ENCODE measurements at regions of chr1 and their contacts with region 1.

Region 1: GRCh38 chr1:8097077-8097799 is 71.1 kb upstream of the ERRFI1 start:
- DNase-seq: peak; percentile 94
- H3K4me3 ChIP-seq: peak overlapping the region in 1 of 3 experiments; percentile 20
- H3K27ac ChIP-seq: peak overlapping the region; percentile 98
- H3K4me1 ChIP-seq: peaks cover 49% of the 10 kb centered on the region
- H3K27me3 ChIP-seq: no peaks in the 10 kb centered on the region
- CTCF ChIP-seq: no peak
- POLR2A ChIP-seq: no peak

Region 2: DNA sequence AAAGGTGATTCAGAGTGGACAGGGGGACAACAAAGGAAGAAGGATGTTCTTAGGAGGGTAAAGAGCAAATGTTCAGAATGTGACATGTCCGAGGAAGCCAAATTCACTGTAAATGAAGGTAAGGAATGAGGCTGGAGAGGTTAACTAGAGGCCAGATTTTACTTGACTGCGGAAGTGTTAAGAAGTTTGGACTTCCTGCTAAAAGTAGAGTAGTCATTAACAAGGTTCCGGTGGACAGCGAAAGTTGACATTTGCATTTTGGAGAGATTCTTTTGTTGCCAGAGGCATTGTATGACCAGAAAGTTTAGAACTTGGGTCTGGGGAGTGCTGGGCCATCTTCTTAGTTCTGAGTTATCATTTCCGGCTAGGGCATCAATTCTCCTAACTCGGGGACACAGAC is 63.9 kb before region 1 on chr1:
- CTCF ChIA-PET with region 1: interaction called, 9 read pairs
- POLR2A ChIA-PET with region 1: no interaction called
- dilution Hi-C with region 1: no loop called
- intact Hi-C with region 1: loop called (anchors 1 kb)
- DNase-seq: no peak
- H3K4me3 ChIP-seq: no peak overlapping the region
- H3K27ac ChIP-seq: no peak overlapping the region
- H3K4me1 ChIP-seq: peaks cover 12% of the 10 kb centered on the region
- H3K27me3 ChIP-seq: no peaks in the 10 kb centered on the region
- CTCF ChIP-seq: no peak
- POLR2A ChIP-seq: no peak

Region 3: DNA sequence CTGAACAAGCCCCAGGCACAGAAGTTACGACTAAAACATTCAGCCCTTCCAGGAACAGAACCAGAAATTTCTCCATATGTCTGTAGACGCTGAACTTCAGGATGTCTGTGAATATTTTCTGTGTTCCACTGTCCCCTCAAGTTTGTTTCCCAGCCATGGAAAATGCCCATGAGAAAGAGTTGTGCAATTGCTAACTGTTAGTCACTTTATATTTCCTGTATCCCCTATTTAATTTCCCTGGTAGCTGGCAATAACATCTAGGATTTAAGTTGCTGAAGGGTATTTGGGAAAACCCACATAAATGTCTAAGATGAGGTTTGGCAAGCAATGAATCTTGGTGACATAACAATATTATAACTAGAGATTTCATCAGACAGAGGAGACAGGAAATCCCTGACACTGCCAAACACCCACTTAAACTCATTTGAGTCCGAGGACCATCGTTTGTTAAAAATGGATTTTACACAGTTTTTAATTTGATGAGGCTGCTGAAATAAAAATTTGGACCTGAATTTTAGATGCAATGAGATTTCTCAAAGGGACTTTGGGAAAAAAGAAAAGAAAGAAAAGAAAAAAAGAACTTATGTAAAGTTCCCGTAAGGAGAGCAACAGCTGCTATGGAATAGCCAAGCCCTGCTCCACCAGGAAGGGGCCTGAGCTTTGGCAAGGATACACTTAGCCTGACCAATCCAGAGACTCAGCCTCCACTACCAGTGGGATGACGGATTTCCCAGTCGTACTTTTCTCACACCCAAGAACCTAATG is 49.4 kb before region 1 on chr1:
- CTCF ChIA-PET with region 1: no interaction called
- POLR2A ChIA-PET with region 1: no interaction called
- dilution Hi-C with region 1: loop called (anchors 10 kb)
- intact Hi-C with region 1: loop called (anchors 1 kb)
- DNase-seq: peak; percentile 90
- H3K4me3 ChIP-seq: no peak overlapping the region
- H3K27ac ChIP-seq: peak overlapping the region; percentile 81
- H3K4me1 ChIP-seq: peaks cover 29% of the 10 kb centered on the region
- H3K27me3 ChIP-seq: no peaks in the 10 kb centered on the region
- CTCF ChIP-seq: no peak
- POLR2A ChIP-seq: no peak

Region 4: DNA sequence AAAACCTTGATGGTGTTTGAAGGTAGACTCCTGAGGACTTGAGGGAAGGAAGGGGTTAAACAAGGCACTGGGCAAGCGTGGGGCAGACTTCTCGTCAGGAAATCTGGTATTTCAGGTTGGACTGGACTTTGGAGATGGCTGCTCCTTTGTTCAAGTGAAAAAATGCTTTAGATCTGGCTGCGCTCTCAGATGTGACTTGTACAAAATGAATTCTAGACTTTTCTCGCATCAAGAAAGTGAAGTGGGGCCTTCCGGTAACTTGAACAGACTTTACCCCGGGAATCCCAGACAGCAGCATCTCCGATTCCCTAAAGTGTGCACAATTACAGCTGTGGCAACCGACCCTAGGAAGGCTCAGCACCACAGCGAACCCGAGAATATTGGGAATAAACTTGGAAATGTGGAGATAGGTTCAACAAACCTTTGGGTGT is 26.8 kb before region 1 on chr1:
- CTCF ChIA-PET with region 1: no interaction called
- POLR2A ChIA-PET with region 1: no interaction called
- dilution Hi-C with region 1: no loop called
- intact Hi-C with region 1: no loop called
- DNase-seq: no peak
- H3K4me3 ChIP-seq: no peak overlapping the region
- H3K27ac ChIP-seq: no peak overlapping the region
- H3K4me1 ChIP-seq: peaks cover 2% of the 10 kb centered on the region
- H3K27me3 ChIP-seq: no peaks in the 10 kb centered on the region
- CTCF ChIP-seq: no peak
- POLR2A ChIP-seq: no peak

Region 5: DNA sequence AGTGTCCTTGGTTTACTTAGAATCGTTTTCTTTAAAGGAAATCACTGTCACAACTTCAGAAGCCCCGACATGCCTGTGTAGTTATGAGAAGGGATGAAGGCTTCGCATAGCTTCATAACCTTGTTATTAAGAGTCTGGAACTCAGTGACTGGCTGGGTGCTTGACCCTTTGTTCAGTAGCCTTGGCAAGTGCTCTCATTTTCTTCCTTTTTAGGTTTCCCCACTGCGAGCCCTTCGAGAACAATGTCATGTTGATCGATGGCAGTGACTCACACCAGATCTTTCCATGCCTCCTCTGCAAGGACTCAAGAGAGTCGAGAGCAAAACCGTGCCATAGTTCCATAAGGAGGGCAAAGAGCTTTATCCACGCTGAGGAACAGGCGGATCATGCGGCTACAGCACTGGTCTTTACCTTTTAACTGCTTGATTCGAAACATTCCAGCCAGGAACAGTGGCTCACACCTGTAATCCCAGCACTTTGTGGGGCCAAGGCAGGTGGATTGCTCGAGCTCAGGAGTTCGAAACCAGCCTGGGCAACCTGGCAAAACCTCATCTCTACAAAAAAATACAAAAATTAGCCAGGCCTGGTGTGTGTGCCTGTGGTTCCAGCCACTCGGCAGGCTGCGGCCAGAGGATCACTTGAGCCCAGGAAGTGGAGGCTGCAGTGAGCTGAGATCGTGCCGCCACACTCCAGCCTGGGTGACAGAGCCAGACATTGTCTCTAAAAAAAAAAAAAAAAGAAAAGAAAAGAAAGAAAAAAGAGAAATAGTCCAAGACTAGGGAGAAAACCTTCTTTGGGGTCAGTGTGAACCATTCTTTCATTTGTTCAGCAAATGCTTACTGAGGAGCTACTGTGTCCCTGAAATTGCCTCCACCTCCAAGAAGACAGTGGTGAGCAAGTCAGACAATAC is 24.3 kb after region 1 on chr1:
- CTCF ChIA-PET with region 1: interaction called, 10 read pairs
- POLR2A ChIA-PET with region 1: interaction called, 19 read pairs
- dilution Hi-C with region 1: no loop called
- intact Hi-C with region 1: loop called (anchors 1 kb)
- DNase-seq: peak; percentile 99
- H3K4me3 ChIP-seq: peak overlapping the region in 1 of 3 experiments; percentile 6
- H3K27ac ChIP-seq: peak overlapping the region; percentile 96
- H3K4me1 ChIP-seq: peaks cover 50% of the 10 kb centered on the region
- H3K27me3 ChIP-seq: no peaks in the 10 kb centered on the region
- CTCF ChIP-seq: no peak
- POLR2A ChIP-seq: peak; percentile 44

Region 6: GRCh38 chr1:8238851-8239305 is 141.6 kb after region 1 on chr1:
- CTCF ChIA-PET with region 1: no interaction called
- POLR2A ChIA-PET with region 1: no interaction called
- dilution Hi-C with region 1: no loop called
- intact Hi-C with region 1: loop called (anchors 2 kb)
- DNase-seq: peak; percentile 33
- H3K4me3 ChIP-seq: no peak overlapping the region
- H3K27ac ChIP-seq: peak overlapping the region; percentile 36
- H3K4me1 ChIP-seq: peaks cover 25% of the 10 kb centered on the region
- H3K27me3 ChIP-seq: no peaks in the 10 kb centered on the region
- CTCF ChIP-seq: peak; percentile 6 to 21
- POLR2A ChIP-seq: no peak

Region 7: DNA sequence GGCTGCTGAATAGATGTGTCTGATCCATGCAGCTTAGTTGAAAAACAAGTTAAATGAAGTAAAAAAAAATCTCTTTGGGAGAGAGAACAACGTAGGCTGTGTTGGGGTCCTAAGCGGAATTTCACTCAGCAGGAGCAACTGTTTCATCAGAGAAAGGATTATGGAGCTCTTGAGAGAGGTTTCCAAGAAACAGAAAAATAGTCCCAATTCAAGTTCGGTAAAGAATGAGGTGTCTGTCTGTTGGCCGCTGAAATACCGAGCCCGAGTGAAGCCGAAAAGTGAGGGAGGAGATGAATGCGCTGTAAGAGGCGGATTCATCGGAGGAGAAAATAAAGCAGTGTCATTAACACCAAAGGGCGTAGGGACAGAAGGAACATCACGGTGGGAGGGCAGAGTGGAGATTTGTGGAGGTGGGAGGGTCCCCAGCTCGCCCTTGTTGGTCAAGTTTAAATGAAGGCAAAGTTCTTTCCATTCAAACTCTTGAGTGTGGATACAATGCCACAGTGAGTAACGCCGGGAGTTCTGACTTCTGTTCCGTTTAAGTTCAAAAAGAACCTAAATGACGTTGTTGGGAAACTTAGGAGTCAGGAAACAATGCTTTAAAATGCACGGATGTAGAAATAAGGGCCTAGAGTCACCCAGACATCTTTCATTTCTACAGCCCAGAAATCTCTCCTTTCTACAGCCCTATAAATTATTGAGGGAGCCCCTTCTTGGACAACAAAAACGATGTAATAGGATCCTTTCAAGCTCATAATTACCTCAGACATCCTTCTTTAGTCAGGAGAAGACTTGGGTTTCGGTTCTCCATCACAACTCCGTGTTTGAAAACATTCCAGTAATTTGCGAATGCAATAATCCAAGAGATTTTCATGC is 205.1 kb after region 1 on chr1:
- CTCF ChIA-PET with region 1: no interaction called
- POLR2A ChIA-PET with region 1: no interaction called
- dilution Hi-C with region 1: no loop called
- intact Hi-C with region 1: no loop called
- DNase-seq: no peak
- H3K4me3 ChIP-seq: no peak overlapping the region
- H3K27ac ChIP-seq: no peak overlapping the region
- H3K4me1 ChIP-seq: no peaks in the 10 kb centered on the region
- H3K27me3 ChIP-seq: peaks cover 0 to 2% of the 10 kb centered on the region in 2 experiments
- CTCF ChIP-seq: no peak
- POLR2A ChIP-seq: no peak

Measured in endothelial cell of umbilical vein (primary cell).